ENCODE measurements at regions of chr12 and their contacts with region 1.

Region 1: DNA sequence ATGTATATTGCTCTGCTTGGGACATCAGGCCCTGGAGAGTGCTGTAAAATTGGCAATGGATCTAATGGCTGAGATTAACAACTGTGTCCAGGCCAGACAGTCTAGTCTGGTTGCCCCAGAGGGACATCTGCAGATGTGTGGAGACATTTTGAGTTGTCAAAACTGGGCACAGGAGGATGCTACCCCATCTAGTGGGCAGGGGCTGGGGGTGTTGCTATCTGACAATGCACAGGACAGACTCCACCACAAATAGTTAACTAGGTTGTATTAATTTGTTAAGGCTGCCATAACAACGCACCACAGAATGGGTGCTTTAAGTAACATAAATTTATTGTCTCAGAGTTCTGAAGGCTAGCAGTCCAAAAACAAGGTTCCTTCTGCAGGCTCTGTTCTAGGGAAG is 302.5 kb upstream of the AMIGO2 start:
- DNase-seq: no peak
- ATAC-seq: peak; percentile 50
- H3K4me3 Mint-ChIP-seq: no peak overlapping the region
- H3K27ac Mint-ChIP-seq: peak overlapping the region; percentile 9
- H3K4me1 Mint-ChIP-seq: peaks cover 48% of the 10 kb centered on the region
- H3K27me3 Mint-ChIP-seq: no peaks in the 10 kb centered on the region

Region 2: DNA sequence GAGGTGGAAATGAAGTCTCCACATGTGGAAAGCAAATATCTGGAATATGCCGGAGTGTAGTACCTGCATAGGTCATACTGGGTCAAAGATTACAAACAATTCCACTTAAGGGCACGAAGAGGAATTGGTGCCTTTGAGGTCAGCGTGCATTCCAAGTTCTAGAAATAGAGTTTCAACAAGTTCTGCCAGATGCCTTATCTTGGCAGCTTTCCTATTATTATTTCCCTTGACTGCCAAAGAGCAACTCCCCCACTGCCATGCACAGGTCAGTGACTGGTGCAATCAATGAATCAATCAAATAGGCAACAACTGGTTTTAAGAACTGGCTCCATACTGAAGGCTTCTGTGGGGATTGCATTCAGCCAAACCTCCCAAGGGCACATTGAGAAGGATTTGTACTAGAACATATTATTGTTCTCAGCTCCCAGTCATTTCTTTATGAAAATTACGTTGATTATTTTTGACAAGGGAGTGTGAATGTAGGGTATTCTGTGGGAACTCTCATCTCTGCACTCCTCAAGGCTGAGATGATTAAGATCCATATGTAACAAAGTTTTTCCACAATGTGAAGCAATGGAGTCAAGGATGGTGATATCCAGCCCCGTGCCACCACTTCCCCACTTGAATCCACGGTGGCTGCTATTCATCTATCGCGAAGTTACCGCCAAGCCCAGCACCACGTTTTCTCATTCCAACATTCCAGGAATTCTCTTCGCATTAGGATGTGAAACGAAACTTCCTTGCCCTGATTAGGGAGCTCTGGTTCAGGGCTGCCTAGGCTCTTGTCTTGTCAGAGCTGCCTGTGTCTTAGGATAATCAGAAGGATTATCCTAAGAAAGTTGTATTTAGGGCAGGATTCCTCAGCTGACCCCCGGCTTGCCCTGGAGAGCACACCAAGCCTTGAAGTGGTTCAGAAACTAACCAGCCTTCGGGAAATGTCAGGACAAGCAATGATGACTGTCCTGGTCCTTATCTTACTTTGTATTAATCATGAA is 418.0 kb before region 1 on chr12:
- CTCF ChIA-PET with region 1: no interaction called
- POLR2A ChIA-PET with region 1: no interaction called
- DNase-seq: no peak
- ATAC-seq: no peak
- H3K4me3 Mint-ChIP-seq: no peak overlapping the region
- H3K27ac Mint-ChIP-seq: no peak overlapping the region
- H3K4me1 Mint-ChIP-seq: no peaks in the 10 kb centered on the region
- H3K27me3 Mint-ChIP-seq: peaks cover 12% of the 10 kb centered on the region

Region 3: DNA sequence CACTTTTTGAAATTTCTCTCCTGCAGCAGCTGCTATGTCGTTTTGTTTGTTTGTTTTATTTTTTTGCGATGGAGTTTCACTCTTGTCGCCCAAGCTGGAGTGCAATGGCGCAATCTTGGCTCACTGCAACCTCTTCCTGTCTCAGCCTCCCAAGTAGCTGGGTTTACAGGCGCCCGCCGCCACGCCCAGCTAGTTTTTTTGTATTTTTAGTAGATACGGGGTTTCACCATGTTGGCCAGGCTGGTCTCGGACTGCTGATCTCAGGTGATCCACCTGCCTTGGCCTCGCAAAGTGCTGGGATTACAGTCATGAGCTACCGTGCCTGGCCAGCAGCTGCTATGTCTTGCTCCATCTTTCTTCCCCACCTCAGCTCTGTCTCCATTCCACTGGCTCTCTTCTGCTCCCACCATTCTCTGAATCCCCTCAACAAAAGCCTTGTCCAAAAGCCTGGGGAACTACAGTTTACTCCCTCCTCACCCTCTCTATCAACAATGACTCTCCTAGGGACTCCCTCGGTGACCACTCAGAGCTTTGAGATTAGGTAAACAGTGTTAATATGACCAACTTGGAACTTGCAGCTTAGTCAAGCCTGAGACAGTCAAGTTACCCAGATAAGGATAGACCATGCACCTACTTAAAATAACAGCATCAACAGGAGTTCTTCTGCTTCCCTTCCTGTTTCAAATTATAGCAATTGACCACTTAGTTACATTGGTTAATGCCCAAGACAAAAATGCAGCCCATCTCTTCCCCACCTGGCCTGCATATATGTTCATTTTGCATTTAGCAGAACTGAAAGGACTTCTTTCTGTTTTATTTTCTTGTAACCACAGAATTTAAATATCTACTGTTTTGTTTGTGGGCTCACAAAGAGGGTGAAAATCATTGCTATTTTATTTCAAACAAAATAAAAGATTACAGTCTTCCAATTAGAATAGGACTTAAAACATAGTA is 113.5 kb before region 1 on chr12:
- CTCF ChIA-PET with region 1: no interaction called
- POLR2A ChIA-PET with region 1: no interaction called
- DNase-seq: no peak
- ATAC-seq: no peak
- H3K4me3 Mint-ChIP-seq: no peak overlapping the region
- H3K27ac Mint-ChIP-seq: peak overlapping the region; percentile 11
- H3K4me1 Mint-ChIP-seq: peaks cover 68% of the 10 kb centered on the region
- H3K27me3 Mint-ChIP-seq: no peaks in the 10 kb centered on the region

Region 4: GRCh38 chr12:47370420-47370819 is 11.9 kb before region 1 on chr12:
- CTCF ChIA-PET with region 1: interaction called, 18 read pairs
- POLR2A ChIA-PET with region 1: no interaction called
- DNase-seq: no peak
- ATAC-seq: no peak
- H3K4me3 Mint-ChIP-seq: no peak overlapping the region
- H3K27ac Mint-ChIP-seq: no peak overlapping the region
- H3K4me1 Mint-ChIP-seq: peaks cover 9% of the 10 kb centered on the region
- H3K27me3 Mint-ChIP-seq: no peaks in the 10 kb centered on the region

Measured in activated CD8-positive, alpha-beta T cell treated with anti-CD3 and anti-CD28 coated beads, Interleukin-2, amount 10 ng/mL, durations not matched to agents 7 days and 5 days (primary cell).